Panc1 (cell line): ENCODE measurements at regions of chrX and their contacts with region 1.

Region 1: DNA sequence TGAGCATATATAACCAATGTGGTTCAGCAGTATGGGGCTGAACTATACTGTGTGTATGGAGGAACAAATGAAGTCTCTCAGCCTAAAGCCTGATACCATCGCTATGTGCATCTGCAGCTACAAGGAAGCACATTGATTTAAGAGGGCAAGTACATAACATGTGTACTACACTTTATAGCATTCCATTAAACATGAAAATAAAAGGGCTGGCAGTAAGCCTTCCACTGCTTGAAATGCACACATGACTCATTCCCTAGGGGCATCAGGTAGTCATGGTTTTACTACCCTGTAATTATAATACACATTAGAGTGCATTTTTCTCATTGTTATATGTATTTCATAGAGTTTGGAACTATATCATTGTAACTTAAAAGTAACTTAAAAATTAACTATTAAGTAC is 51.2 kb downstream of the SMARCA1 start:
- DNase-seq: no peak
- ATAC-seq: no peak; the same call in 1 of the 2 replicates
- H3K4me3 ChIP-seq: no peak overlapping the region
- H3K27ac ChIP-seq: no peak overlapping the region
- H3K4me1 ChIP-seq: no peaks in the 10 kb centered on the region
- H3K27me3 ChIP-seq: no peaks in the 10 kb centered on the region
- CTCF ChIP-seq: no peak

Region 2: GRCh38 chrX:129565046-129565650 is 93.0 kb after region 1 on chrX:
- CTCF ChIA-PET with region 1: no interaction called
- POLR2A ChIA-PET with region 1: interaction called, 10 read pairs
- in situ Hi-C with region 1: no loop called
- intact Hi-C with region 1: no loop called
- DNase-seq: no peak
- ATAC-seq: no peak
- H3K4me3 ChIP-seq: no peak overlapping the region
- H3K27ac ChIP-seq: no peak overlapping the region
- H3K4me1 ChIP-seq: no peaks in the 10 kb centered on the region
- H3K27me3 ChIP-seq: no peaks in the 10 kb centered on the region
- CTCF ChIP-seq: no peak

Region 3: DNA sequence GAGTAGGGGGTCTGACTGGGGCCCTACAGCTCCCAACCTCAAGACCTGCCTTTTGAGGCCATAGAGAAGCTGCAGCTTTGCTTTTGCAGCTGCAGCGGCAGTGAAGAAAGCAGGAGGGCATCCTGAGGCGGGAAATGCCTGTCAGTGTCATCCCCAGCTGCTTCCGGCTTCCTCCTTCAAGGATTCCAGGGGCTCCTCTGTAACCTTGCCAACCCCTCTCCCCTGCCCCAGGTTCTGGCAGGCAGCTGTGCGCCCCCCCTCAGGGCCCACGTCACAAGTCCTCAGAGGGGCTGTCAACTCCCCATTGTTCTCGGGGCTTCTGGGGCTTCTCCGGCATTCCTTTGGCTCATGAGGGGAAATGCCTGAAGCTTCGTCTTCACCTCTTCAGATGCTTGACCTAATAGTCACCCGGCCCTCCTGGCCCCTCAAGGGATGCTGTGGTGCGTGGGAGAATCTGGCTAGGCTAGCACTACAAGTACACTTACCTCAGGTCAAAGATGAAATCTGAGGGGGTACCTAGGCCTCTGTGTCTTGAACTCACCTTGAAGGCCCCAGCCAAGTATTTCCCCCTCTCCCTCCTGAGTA is 150.7 kb after region 1 on chrX:
- CTCF ChIA-PET with region 1: no interaction called
- POLR2A ChIA-PET with region 1: no interaction called
- in situ Hi-C with region 1: no loop called
- intact Hi-C with region 1: no loop called
- DNase-seq: no peak
- ATAC-seq: no peak; the same call in 1 of the 2 replicates
- H3K4me3 ChIP-seq: no peak overlapping the region
- H3K27ac ChIP-seq: no peak overlapping the region
- H3K4me1 ChIP-seq: no peaks in the 10 kb centered on the region
- H3K27me3 ChIP-seq: no peaks in the 10 kb centered on the region
- CTCF ChIP-seq: no peak

Region 4: GRCh38 chrX:129823115-129823514 is 351.0 kb after region 1 on chrX:
- CTCF ChIA-PET with region 1: no interaction called
- POLR2A ChIA-PET with region 1: no interaction called
- in situ Hi-C with region 1: no loop called
- intact Hi-C with region 1: no loop called
- DNase-seq: no peak
- ATAC-seq: peak; percentile 94
- H3K4me3 ChIP-seq: no peak overlapping the region
- H3K27ac ChIP-seq: no peak overlapping the region
- H3K4me1 ChIP-seq: no peaks in the 10 kb centered on the region
- H3K27me3 ChIP-seq: no peaks in the 10 kb centered on the region
- CTCF ChIP-seq: peak; percentile 74